IMR-90 (cell line): ENCODE measurements at regions of chr22 and their contacts with region 1.

Region 1: DNA sequence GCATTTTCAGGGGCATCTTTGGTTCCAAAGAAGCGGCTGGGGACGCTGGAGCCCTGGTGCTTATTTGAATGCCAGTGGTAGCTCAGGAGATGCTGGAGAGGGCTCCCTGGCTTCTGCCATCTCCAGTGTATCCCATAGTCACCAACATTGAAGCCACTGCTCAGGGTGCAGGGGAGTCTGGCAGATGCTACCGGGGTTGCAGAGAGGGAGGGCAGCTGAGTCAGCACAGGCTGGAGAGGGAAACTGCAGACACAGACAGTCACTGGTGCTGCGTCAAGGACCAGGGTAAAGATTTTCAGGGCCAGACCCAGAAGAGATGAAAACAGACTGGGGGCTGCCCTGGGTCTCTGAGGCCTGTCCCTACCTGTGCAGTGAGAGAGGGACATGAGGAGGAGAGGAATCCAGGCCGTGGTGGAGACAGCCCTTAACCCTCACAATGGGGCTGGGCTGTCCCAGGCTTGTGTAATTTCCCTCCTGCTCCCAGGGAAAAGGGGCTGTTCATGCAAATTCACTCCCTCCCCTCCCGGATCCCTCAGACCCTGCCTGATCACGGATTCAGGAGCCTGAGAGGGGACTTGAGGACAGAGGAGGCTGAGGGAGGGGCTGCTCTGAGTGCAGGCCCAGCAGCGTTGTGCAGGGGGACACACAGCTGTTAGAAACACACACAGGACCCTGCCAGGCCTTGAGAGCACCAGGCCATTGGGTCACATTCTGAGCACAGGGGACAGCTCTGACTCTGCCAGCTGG is 126.9 kb upstream of the GRK3 start:
- DNase-seq: no peak
- ATAC-seq: peak; percentile 63
- H3K4me3 ChIP-seq: no peak overlapping the region
- H3K27ac ChIP-seq: no peak overlapping the region
- H3K4me1 ChIP-seq: no peaks in the 10 kb centered on the region
- H3K27me3 ChIP-seq: peaks cover 16% of the 10 kb centered on the region
- CTCF ChIP-seq: no peak
- POLR2A ChIP-seq: no peak
- RAD21 ChIP-seq: no peak

Region 2: DNA sequence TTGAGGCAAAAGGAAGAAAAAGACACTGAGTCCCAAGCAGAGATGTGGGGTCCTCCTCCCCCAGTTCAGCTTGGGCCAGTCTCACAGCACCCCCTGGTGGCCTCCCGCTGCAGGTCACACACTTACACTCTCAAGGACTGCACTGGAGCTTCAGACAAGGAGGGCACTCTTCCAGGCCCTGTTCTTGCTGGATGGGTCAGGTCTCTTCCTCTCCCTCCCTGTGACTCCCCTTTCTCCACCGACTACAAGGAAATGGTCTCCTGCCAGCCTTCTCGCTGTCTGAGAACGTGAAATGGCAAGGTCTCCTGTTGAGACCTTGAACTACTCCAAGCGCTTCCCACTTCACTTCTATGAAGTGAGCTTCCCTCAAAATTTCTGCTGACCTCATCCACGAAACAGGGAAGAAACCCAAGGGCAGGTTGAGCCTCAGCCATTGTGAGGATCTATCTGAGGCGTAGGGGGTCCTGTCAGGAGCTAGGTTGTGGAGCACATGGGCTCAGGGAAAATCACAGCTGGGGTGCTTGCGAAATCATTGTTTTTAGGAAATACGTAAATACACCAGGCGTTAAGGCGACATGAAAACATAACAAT is 1846.3 kb before region 1 on chr22:
- CTCF ChIA-PET with region 1: no interaction called
- POLR2A ChIA-PET with region 1: no interaction called
- dilution Hi-C with region 1: no loop called
- in situ Hi-C with region 1: loop called (anchors 10 kb)
- intact Hi-C with region 1: no loop called
- DNase-seq: peak; percentile 54
- ATAC-seq: peak; percentile 99
- H3K4me3 ChIP-seq: no peak overlapping the region
- H3K27ac ChIP-seq: no peak overlapping the region
- H3K4me1 ChIP-seq: no peaks in the 10 kb centered on the region; the same call in 1 of the 2 replicates
- H3K27me3 ChIP-seq: peaks cover 2% of the 10 kb centered on the region
- CTCF ChIP-seq: peak; percentile 73
- POLR2A ChIP-seq: no peak
- RAD21 ChIP-seq: peak; percentile 84

Region 3: DNA sequence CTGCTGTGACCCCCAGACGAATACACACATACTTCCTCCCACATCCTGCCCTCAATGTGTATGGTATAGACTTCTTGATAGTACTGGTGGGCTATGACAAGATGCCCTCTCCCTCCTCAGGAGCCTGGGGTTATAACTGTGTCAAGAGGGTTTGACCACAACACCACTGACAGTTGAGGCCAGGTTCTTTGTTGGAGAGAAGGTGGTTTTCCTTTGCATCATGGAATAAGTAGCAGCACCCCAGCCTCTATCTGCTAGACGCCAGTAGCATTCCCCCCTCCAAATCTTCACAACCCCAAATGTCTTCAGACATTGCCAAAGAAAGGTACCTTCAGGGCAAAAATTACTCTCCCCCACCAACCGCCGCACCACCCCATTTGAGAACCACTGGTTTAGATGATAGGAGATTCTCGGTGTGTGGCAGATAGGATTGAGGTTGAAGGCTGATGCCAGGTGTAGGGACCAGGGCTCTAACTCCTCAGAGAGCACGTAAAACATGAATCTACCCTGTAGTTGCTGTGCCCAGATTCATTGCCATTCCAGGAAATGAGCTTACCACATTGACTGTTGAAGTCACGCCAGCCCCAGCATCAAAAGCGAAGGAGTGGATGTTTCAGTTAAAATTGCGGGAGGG is 298.9 kb after region 1 on chr22:
- CTCF ChIA-PET with region 1: no interaction called
- POLR2A ChIA-PET with region 1: interaction called, 18 read pairs
- dilution Hi-C with region 1: no loop called
- in situ Hi-C with region 1: no loop called
- intact Hi-C with region 1: no loop called
- DNase-seq: no peak
- ATAC-seq: no peak
- H3K4me3 ChIP-seq: no peak overlapping the region
- H3K27ac ChIP-seq: no peak overlapping the region
- H3K4me1 ChIP-seq: no peaks in the 10 kb centered on the region
- H3K27me3 ChIP-seq: no peaks in the 10 kb centered on the region
- CTCF ChIP-seq: no peak
- POLR2A ChIP-seq: no peak
- RAD21 ChIP-seq: no peak